ENCODE measurements at regions of chr11 and their contacts with region 1.

Region 1: DNA sequence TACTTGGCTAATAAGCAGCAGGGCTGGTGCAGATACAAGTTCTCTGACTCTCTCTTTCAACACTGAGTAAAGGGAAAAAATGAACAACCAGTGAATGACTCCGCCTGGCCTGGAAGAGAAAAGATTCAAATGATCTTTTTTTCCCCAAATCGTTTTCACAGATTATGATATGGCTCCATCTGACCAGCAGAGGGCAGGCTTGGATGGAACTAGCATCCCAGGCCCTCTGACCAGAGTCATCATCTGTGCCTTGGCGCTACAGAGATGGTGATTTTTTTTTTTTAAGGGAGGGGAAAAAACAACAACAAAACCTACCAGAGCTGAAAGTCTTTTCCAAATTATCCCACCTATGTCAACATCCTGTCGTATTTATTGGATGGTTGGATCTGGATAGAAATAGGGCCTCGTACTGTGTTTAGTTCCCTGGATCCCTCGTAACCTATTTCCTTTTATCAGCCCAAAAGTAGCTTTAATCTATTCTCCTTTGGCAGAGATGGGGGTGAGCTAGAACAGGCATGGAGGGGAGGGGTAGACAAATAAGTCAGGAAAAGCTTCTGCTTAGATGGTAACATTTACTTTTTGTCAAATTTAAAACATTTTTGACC is 69.7 kb downstream of the PRSS23 start:
- DNase-seq: peak; percentile 67
- ATAC-seq: peak; percentile 42
- H3K4me3 Mint-ChIP-seq: no peak overlapping the region
- H3K27ac Mint-ChIP-seq: no peak overlapping the region
- H3K4me1 Mint-ChIP-seq: no peaks in the 10 kb centered on the region
- H3K27me3 Mint-ChIP-seq: peaks cover 4% of the 10 kb centered on the region
- CTCF ChIP-seq: peak; percentile 79

Region 2: DNA sequence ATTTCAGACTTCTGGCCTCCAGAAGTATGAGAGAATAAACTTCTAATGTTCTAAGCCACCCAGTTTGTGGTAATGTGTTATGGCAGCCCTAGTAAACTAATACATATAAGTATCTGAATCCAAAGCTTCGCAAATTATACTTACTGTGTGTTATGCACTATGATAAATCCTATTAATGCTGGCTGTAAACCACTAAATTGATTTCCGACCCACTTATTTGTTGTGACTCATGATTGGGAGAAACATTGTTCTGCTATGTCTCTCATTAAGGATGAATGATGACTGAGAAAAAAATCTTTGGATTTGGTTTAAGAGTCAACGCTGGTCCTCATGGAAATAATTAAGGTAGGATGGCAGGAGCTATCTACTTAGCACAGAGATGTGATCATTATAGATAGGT is 23.2 kb after region 1 on chr11:
- CTCF ChIA-PET with region 1: interaction called, 15 read pairs
- POLR2A ChIA-PET with region 1: no interaction called
- intact Hi-C with region 1: no loop called
- DNase-seq: no peak
- ATAC-seq: no peak
- H3K4me3 Mint-ChIP-seq: no peak overlapping the region
- H3K27ac Mint-ChIP-seq: no peak overlapping the region
- H3K4me1 Mint-ChIP-seq: no peaks in the 10 kb centered on the region
- H3K27me3 Mint-ChIP-seq: peaks cover 5% of the 10 kb centered on the region
- CTCF ChIP-seq: no peak

Region 3: DNA sequence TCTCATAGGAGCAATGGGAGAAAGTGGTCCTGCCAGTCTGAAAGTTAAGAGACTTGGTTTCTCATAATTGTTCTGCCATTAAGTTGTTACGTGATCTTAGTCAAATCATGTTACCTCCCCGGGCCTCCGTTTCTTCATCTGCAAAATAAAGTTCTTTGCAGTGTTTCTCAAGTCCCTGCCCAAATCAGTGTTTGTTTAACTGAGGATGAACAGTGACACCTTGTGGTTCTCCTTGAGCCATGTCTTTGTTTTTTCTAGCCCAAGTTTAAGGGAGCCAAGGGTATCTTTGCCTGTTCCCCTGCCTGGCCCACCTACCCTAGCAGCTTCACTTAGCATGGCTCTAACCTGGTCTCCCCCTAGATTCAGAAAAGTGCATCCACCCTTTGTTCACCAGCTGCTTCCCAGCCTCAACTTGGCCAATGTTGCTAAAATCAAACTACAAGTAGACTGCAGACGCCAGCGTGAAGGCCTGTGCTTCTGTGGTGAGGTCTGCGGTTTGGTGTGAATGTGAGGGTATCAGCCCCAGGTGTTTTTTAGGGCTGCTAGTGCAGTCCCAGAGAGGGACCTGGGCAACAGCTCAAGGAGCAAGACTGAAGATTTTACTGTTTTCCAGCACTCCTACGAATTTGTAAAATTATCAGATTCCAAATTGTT is 49.6 kb after region 1 on chr11:
- CTCF ChIA-PET with region 1: interaction called, 23 read pairs
- POLR2A ChIA-PET with region 1: no interaction called
- intact Hi-C with region 1: loop called (anchors 2 kb)
- DNase-seq: peak; percentile 3
- ATAC-seq: no peak
- H3K4me3 Mint-ChIP-seq: no peak overlapping the region
- H3K27ac Mint-ChIP-seq: no peak overlapping the region
- H3K4me1 Mint-ChIP-seq: no peaks in the 10 kb centered on the region
- H3K27me3 Mint-ChIP-seq: peaks cover 2% of the 10 kb centered on the region
- CTCF ChIP-seq: peak; percentile 24

Region 4: DNA sequence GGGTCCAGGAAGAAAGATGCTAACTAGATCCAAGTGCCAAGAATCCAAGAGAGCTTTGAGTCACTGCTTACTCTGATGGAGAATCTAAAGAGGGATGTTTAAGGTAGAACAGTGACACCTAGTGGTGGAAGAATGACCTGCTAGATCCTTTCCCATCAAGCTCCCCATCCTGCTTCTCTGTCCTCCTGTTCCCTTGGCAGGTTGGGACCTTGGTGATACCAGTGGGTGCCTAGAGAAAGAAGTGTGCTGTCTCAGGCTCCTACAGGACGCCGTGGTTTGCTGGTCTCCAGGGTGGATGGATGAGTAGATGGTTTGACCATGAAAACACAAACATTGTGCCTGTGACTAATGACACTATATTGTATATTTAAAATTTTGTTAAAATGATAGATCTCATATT is 551.4 kb after region 1 on chr11:
- CTCF ChIA-PET with region 1: interaction called, 11 read pairs
- POLR2A ChIA-PET with region 1: no interaction called
- intact Hi-C with region 1: no loop called
- DNase-seq: peak; percentile 33
- ATAC-seq: peak; percentile 58
- H3K4me3 Mint-ChIP-seq: no peak overlapping the region
- H3K27ac Mint-ChIP-seq: no peak overlapping the region
- H3K4me1 Mint-ChIP-seq: no peaks in the 10 kb centered on the region
- H3K27me3 Mint-ChIP-seq: peaks cover 2% of the 10 kb centered on the region
- CTCF ChIP-seq: peak; percentile 68

Measured in activated CD8-positive, alpha-beta T cell treated with anti-CD3 and anti-CD28 coated beads for 36 hours (primary cell).